ENCODE measurements at regions of chrX and their contacts with region 1.

Region 1: DNA sequence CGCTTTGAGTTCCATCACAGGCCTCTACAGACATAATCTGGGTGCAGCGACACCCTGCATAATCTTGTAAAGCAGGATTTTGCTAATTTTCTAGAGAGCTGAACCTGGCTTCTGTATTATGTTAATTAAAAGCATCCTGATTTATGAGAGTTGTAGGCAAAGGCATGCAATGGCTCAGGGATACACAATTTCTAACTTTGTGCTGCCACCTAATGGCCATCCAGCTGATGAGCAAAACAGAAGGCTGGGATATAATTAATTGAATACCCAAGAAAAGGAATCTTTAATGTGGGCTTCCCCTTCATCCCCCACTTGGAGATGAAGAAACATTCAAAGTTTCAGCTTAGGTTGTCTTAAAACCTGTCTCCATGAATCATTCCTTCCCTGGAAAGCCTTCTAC is 78.1 kb downstream of the BMP15 start:
- DNase-seq: peak in 1 of 2 experiments; percentile 33
- H3K4me3 ChIP-seq: no peak overlapping the region
- H3K4me3 Mint-ChIP-seq: no peak overlapping the region
- H3K27ac Mint-ChIP-seq: no peak overlapping the region
- H3K4me1 ChIP-seq: no peaks in the 10 kb centered on the region
- H3K4me1 Mint-ChIP-seq: no peaks in the 10 kb centered on the region
- H3K27me3 ChIP-seq: no peaks in the 10 kb centered on the region
- H3K27me3 Mint-ChIP-seq: peaks cover 3% of the 10 kb centered on the region
- CTCF ChIP-seq: peak in 1 of 2 experiments; percentile 51

Region 2: GRCh38 chrX:50691820-50692219 is 296.8 kb before region 1 on chrX:
- CTCF ChIA-PET with region 1: interaction called, 3 read pairs
- POLR2A ChIA-PET with region 1: no interaction called
- intact Hi-C with region 1: loop called (anchors 2 kb)
- DNase-seq: peak in 1 of 2 experiments; percentile 53
- H3K4me3 ChIP-seq: no peak overlapping the region
- H3K4me3 Mint-ChIP-seq: no peak overlapping the region
- H3K27ac Mint-ChIP-seq: no peak overlapping the region
- H3K4me1 ChIP-seq: no peaks in the 10 kb centered on the region
- H3K4me1 Mint-ChIP-seq: no peaks in the 10 kb centered on the region
- H3K27me3 ChIP-seq: no peaks in the 10 kb centered on the region
- H3K27me3 Mint-ChIP-seq: peaks cover 2% of the 10 kb centered on the region
- CTCF ChIP-seq: peak; percentile 57 to 63

Region 3: GRCh38 chrX:50747471-50747900 is 241.2 kb before region 1 on chrX:
- CTCF ChIA-PET with region 1: interaction called, 3 read pairs
- POLR2A ChIA-PET with region 1: no interaction called
- intact Hi-C with region 1: loop called (anchors 2 kb)
- DNase-seq: peak in 1 of 2 experiments; percentile 25
- H3K4me3 ChIP-seq: no peak overlapping the region
- H3K4me3 Mint-ChIP-seq: no peak overlapping the region
- H3K27ac Mint-ChIP-seq: no peak overlapping the region
- H3K4me1 ChIP-seq: no peaks in the 10 kb centered on the region
- H3K4me1 Mint-ChIP-seq: no peaks in the 10 kb centered on the region
- H3K27me3 ChIP-seq: no peaks in the 10 kb centered on the region
- H3K27me3 Mint-ChIP-seq: peaks cover 8% of the 10 kb centered on the region
- CTCF ChIP-seq: peak; percentile 55 to 65

Region 4: DNA sequence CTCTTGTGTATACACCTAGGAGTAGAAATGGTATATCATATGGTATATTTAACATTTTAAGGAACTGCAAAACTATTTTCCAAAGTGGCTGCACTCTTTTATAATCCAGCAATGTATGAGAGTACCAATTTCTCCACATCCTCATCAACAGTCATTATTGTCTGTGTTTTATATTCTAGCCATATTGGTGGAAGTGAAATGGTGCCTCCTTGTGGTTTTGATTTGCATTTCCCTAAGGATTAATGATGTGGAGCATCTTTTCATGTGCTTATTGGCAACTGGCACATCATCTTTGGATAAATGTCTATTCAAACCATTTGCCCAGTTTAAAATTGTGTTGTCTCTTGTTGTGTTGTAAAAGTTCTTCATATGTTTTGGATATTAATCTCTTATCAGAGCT is 68.5 kb before region 1 on chrX:
- CTCF ChIA-PET with region 1: no interaction called
- POLR2A ChIA-PET with region 1: no interaction called
- intact Hi-C with region 1: loop called (anchors 5 kb)
- DNase-seq: peak in 1 of 2 experiments; percentile 4
- H3K4me3 ChIP-seq: no peak overlapping the region
- H3K4me3 Mint-ChIP-seq: no peak overlapping the region
- H3K27ac Mint-ChIP-seq: no peak overlapping the region
- H3K4me1 ChIP-seq: no peaks in the 10 kb centered on the region
- H3K4me1 Mint-ChIP-seq: no peaks in the 10 kb centered on the region
- H3K27me3 ChIP-seq: no peaks in the 10 kb centered on the region
- H3K27me3 Mint-ChIP-seq: no peaks in the 10 kb centered on the region
- CTCF ChIP-seq: peak; percentile 11 to 35

Region 5: GRCh38 chrX:50941638-50942037 is 47.0 kb before region 1 on chrX:
- CTCF ChIA-PET with region 1: no interaction called
- POLR2A ChIA-PET with region 1: no interaction called
- intact Hi-C with region 1: no loop called
- DNase-seq: peak in 1 of 2 experiments; percentile 1
- H3K4me3 ChIP-seq: no peak overlapping the region
- H3K4me3 Mint-ChIP-seq: no peak overlapping the region
- H3K27ac Mint-ChIP-seq: no peak overlapping the region
- H3K4me1 ChIP-seq: no peaks in the 10 kb centered on the region
- H3K4me1 Mint-ChIP-seq: no peaks in the 10 kb centered on the region
- H3K27me3 ChIP-seq: no peaks in the 10 kb centered on the region
- H3K27me3 Mint-ChIP-seq: peaks cover 4% of the 10 kb centered on the region
- CTCF ChIP-seq: no peak